Activated naive CD4-positive, alpha-beta T cell treated with anti-CD3 and anti-CD28 coated beads, Interleukin-2, amount 10 ng/mL, durations not matched to agents 7 days and 5 days (primary cell): ENCODE measurements at regions of chr20 and their contacts with region 1.

Region 1: GRCh38 chr20:58087193-58087858 is 141.1 kb downstream of the ANKRD60 start:
- DNase-seq: peak; percentile 25
- H3K4me3 Mint-ChIP-seq: no peak overlapping the region
- H3K27ac Mint-ChIP-seq: no peak overlapping the region
- H3K4me1 Mint-ChIP-seq: no peaks in the 10 kb centered on the region
- H3K27me3 Mint-ChIP-seq: peaks cover 17% of the 10 kb centered on the region

Region 2: DNA sequence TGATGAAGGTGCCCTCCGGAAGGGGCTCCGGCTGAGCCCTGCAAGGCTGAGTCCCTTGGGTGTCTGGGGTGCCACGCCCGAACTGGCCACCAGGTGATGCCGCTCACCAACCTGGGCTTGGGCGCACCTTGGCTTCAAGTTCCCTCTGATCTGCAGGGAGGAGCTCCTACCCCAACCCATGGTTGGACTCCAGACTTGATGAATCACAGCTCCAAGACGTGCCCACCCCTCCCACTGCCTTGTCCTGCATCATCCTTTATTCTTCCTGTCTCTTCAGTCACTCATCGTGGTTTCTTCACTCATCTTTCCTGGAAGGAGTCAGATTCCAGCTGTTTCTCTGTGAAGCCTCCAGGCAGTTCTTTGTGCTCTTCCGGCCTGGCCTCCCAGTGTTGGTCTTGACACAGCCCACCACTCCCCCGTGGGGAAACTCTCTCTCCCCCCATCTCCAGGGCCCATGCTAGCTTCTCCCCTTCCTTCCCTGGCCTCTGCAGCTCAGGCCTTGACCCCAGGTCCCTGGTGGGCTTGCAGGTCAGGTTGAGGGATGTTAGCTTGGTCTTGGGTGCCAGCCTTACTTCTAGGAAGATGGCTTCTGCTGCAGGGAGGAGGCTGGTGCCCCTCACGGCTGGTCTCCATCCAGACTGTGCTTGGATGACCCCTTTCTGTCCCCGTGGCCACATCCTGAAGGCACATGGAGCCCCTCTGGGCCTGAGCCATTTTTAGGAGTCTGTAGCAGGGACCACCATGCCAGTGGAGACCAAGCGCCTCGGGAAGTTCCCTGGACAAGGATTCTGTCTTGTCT is 464.5 kb before region 1 on chr20:
- CTCF ChIA-PET with region 1: interaction called, 32 read pairs
- DNase-seq: peak; percentile 85
- H3K4me3 Mint-ChIP-seq: peak overlapping the region; percentile 48
- H3K27ac Mint-ChIP-seq: peak overlapping the region; percentile 88
- H3K4me1 Mint-ChIP-seq: peaks cover 87% of the 10 kb centered on the region
- H3K27me3 Mint-ChIP-seq: peaks cover 29% of the 10 kb centered on the region